GM10248 (cell line): ENCODE measurements at regions of chr17 and their contacts with region 1.

Region 1: DNA sequence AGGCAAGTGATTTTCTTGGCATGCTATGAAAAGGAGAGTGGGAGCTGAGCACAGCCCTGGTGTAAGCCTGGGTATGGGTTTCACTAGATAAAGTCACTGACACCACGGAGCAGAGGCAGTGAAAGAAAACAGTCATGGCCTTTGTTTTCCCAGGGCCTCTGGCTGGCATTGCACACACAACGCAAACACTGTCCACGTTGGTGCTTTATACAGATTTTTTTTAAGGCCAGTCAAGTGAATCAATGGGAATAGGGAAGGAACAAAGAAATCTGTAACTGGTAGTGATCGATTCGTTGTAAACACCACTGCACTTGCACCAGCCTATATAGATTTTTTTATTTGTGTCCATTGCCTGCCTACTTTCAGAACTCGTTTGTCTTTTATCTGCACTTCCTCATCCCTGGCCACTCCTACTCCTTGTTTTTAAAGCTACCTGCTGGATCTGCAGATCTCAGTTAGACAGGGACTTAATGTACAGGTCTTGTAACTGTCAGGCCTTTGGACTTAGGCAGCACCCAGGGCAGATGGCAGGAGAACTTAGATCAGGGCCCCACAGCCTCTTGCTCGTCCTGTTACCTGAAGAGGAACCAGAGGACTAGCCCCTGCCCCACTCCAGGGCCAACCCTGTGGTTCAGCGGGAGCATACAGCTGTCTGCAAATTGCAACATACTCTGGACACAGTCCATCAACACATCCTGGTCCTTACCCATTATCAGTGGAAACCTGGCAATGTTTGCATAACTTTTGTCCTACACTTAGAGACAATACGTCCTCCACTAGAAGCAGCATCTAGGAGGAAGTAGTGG is 10.6 kb upstream of the TMIGD1 start:
- DNase-seq: no peak
- CTCF ChIP-seq: no peak

Region 2: DNA sequence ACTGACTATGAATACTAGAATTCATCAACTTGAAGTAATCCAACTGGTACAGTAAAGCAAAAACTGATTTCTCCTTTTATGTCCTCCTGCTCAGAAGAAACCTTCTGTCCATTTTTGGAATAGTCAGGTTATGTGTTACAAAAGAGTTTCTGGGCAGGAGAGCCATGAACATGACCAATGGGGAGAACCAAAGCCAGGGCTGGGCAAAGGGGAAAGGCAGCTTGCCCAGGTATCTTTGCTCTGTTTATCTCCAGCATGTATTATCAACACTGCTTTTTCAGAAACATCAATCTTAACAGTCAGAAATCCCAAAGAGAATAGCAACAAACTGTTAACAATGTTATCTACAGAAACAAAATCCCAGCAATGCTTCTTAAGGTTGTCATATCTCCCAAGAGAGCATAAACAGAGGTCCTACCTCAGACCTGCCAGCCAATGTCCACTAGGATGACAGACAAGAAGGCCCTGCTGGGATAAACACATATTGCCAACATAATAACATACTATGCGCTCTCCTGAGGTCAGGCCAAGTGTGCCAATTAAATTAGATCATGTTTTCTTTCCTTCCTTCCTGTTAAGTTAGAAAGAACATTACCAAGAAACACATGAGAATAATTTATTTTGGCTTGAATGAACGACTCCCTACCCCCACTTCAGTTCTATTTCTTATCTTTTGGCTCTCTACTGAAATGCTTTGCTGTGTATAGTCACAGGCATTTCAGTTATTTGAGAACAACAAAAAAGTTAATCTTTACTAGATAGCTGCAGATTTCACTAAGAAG is 80.7 kb before region 1 on chr17:
- CTCF ChIA-PET with region 1: no interaction called
- POLR2A ChIA-PET with region 1: no interaction called
- DNase-seq: no peak
- CTCF ChIP-seq: no peak

Region 3: DNA sequence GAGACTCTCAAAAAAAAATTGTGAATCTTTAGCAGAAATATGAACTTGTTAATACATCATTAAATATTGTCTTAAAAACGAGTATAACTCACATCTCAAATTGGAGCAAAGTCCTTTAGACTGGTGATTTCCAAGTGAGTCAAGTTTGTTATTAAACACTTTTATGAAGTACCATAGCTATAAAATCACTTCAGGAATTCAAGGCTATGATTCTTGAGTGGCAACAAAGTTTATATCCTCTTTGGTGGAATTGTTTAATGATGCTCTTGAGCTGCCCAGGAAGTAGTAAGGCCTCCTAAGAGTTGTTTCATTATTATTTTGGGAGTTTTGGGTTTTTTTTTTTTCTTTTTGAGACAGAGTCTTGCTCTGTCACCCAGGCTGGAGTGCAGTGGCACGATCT is 36.1 kb before region 1 on chr17:
- CTCF ChIA-PET with region 1: interaction called, 10 read pairs
- POLR2A ChIA-PET with region 1: no interaction called
- DNase-seq: no peak
- CTCF ChIP-seq: no peak

Region 4: GRCh38 chr17:30354701-30355100 is 10.2 kb after region 1 on chr17:
- CTCF ChIA-PET with region 1: interaction called, 27 read pairs
- POLR2A ChIA-PET with region 1: no interaction called
- DNase-seq: no peak
- CTCF ChIP-seq: no peak

Region 5: DNA sequence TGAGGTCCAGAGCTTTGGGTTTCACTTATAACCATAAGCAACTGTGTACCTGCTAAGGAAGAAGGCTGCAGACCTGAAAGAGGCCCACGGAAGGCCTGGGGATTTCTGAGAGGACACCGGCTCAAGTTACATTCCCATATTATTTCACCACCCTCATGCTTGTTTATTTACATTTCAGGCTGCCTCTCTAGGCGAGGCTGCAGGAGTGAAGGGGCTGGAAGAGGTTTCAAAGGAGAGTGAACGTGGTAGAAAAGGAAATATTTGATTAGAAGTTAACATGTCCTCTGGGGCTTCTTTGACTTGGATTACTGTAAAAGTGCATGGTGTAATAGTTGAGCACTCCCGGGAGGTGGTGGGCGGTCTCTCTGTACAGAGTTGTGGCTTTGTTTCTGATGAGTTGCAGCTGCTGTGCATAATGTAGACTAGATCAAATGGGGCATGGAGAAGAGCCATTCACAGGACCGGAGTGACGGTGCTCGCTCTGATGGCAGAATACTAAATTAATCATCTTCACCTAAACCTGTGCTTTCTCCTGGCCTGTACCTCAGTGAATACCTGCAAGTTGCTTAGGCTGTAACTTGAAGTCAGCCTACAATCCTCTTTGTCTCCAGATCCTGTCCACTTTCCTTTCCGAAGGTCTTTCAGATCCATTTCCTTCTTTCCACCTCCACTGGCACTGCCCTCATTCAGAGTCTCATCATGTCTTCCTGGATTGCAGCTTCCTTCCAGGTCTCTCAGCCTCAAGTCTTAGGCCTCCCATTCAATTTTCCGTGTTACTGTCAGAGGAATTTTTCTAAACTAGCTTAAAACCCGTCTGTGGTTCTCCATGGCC is 32.4 kb after region 1 on chr17:
- CTCF ChIA-PET with region 1: interaction called, 11 read pairs
- POLR2A ChIA-PET with region 1: no interaction called
- DNase-seq: peak; percentile 35
- CTCF ChIP-seq: no peak